Breast epithelium (tissue), 4 donors: ENCODE measurements at regions of chr5 and their contacts with region 1.

Region 1: GRCh38 chr5:38414348-38414747 is 142.1 kb downstream of the LIFR start:
- DNase-seq: no peak
- H3K4me3 ChIP-seq: no peak overlapping the region
- H3K27ac ChIP-seq: no peak overlapping the region
- H3K4me1 ChIP-seq: no peaks in the 10 kb centered on the region
- H3K27me3 ChIP-seq: no peaks in the 10 kb centered on the region
- CTCF ChIP-seq: no peak
- POLR2A ChIP-seq: no peak

Region 2: DNA sequence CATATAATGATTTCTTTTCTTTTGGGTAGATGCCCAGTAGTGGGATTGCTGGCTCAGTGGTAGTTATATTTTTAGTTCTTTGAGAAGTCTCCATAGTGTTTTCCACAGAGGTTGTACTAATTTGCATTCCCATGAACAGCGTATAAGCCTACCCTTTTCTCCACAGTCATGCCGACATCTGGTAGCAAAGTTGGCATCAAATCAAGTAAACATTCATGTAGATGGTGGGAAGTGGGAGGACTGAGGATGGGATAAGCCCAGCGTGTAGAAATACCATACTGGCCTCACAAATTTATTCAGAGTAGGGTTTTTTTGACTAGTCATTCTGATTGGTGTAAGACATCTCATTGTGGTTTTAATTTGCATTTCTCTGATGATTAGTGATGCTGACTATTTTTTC is 40.6 kb before region 1 on chr5:
- intact Hi-C with region 1: loop called (anchors 2 kb)
- DNase-seq: no peak
- H3K4me3 ChIP-seq: no peak overlapping the region
- H3K27ac ChIP-seq: no peak overlapping the region
- H3K4me1 ChIP-seq: no peaks in the 10 kb centered on the region
- H3K27me3 ChIP-seq: no peaks in the 10 kb centered on the region
- CTCF ChIP-seq: no peak
- POLR2A ChIP-seq: no peak

Region 3: DNA sequence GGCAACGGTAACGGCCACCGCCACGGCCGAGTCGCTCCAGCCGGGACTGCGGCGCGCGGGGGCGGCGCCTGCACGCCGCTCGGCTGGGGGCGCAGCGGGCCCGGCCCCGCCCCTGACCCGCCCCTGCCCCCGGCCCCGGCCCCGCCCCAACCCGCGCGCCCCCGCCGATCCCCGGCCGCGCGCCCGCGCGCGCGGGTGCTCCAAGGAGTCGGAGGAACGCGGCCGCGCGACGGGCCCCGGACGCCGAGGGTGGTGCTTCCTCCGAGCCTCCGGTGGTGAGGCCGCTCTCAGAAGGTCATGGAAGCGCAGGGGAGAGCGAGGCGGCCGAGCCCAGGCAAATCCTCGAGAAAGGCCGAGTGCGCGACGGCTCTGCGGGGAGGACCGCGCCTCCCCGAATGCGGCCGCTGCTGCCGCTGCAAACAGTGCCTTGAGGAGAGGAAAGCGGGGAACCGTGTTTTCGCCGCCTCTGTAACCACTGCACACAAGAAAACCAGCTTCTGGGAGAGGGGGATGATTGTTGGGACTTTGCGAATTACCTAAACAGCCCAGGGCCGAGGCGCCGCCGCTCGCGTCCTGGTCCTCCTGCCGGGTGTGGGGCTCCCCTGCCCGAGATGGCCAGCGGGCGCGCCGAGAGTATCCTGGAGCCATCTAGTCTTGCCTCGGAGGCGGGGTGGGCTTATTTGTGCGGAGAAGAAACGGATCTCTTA is 142.4 kb after region 1 on chr5 and contains the start of gene LIFR:
- intact Hi-C with region 1: no loop called
- DNase-seq: peak; percentile 72 to 81
- H3K4me3 ChIP-seq: peak within 1 kb of the TSS; percentile 83 to 91 (median 88)
- H3K27ac ChIP-seq: peak within 1 kb of the TSS; percentile 94 to 97
- H3K4me1 ChIP-seq: peaks cover 0 to 5% of the 10 kb centered on the region in 2 donors
- H3K27me3 ChIP-seq: no peaks in the 10 kb centered on the region
- CTCF ChIP-seq: peak in 1 of 3 donors; percentile 15
- POLR2A ChIP-seq: peak; percentile 85
- total RNA-seq, gene LIFR: 179 to 225 (median 222) TPM